ENCODE measurements at regions of chr12 and their contacts with region 1.

Region 1: DNA sequence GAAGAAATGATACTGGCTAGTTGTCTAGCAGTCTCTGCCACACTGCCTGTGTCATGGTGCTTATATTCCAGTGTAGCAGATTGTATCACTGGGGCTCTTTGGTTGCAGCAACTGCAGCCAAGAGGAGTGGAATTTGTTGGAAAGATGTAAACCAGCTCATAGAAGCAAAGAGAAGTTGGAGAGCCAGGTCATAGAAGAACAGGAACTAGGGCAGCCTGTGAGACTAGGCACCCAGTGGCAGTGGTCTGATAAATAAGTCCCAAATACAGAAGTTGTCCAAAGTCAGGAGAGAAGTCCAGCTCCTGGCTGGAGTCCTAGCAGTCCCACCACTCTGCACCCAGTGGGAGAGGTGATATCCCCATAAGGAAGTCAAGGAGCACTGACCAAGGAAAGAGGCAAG is 172.5 kb upstream of the ARID2 start:
- DNase-seq: no peak
- H3K4me3 ChIP-seq: no peak overlapping the region
- H3K27ac ChIP-seq: no peak overlapping the region
- H3K4me1 ChIP-seq: no peaks in the 10 kb centered on the region
- H3K27me3 ChIP-seq: no peaks in the 10 kb centered on the region
- CTCF ChIP-seq: no peak
- POLR2A ChIP-seq: no peak

Region 2: GRCh38 chr12:44917141-44917540 is 639.9 kb before region 1 on chr12:
- intact Hi-C with region 1: no loop called
- DNase-seq: no peak
- H3K4me3 ChIP-seq: no peak overlapping the region
- H3K27ac ChIP-seq: no peak overlapping the region
- H3K4me1 ChIP-seq: no peaks in the 10 kb centered on the region
- H3K27me3 ChIP-seq: no peaks in the 10 kb centered on the region
- CTCF ChIP-seq: no peak
- POLR2A ChIP-seq: no peak

Region 3: GRCh38 chr12:45518291-45519235 is 38.5 kb before region 1 on chr12:
- intact Hi-C with region 1: no loop called
- DNase-seq: no peak
- H3K4me3 ChIP-seq: no peak overlapping the region
- H3K27ac ChIP-seq: no peak overlapping the region
- H3K4me1 ChIP-seq: no peaks in the 10 kb centered on the region
- H3K27me3 ChIP-seq: no peaks in the 10 kb centered on the region
- CTCF ChIP-seq: no peak
- POLR2A ChIP-seq: no peak

Region 4: GRCh38 chr12:45543906-45544315 is 13.1 kb before region 1 on chr12:
- intact Hi-C with region 1: no loop called
- DNase-seq: no peak
- H3K4me3 ChIP-seq: no peak overlapping the region
- H3K27ac ChIP-seq: no peak overlapping the region
- H3K4me1 ChIP-seq: no peaks in the 10 kb centered on the region
- H3K27me3 ChIP-seq: no peaks in the 10 kb centered on the region
- CTCF ChIP-seq: peak; percentile 48 to 64 (median 50)
- POLR2A ChIP-seq: no peak

Region 5: GRCh38 chr12:45601888-45602287 is 44.9 kb after region 1 on chr12:
- intact Hi-C with region 1: loop called (anchors 2 kb)
- DNase-seq: no peak
- H3K4me3 ChIP-seq: no peak overlapping the region
- H3K27ac ChIP-seq: no peak overlapping the region
- H3K4me1 ChIP-seq: no peaks in the 10 kb centered on the region
- H3K27me3 ChIP-seq: no peaks in the 10 kb centered on the region
- CTCF ChIP-seq: no peak
- POLR2A ChIP-seq: no peak

Region 6: DNA sequence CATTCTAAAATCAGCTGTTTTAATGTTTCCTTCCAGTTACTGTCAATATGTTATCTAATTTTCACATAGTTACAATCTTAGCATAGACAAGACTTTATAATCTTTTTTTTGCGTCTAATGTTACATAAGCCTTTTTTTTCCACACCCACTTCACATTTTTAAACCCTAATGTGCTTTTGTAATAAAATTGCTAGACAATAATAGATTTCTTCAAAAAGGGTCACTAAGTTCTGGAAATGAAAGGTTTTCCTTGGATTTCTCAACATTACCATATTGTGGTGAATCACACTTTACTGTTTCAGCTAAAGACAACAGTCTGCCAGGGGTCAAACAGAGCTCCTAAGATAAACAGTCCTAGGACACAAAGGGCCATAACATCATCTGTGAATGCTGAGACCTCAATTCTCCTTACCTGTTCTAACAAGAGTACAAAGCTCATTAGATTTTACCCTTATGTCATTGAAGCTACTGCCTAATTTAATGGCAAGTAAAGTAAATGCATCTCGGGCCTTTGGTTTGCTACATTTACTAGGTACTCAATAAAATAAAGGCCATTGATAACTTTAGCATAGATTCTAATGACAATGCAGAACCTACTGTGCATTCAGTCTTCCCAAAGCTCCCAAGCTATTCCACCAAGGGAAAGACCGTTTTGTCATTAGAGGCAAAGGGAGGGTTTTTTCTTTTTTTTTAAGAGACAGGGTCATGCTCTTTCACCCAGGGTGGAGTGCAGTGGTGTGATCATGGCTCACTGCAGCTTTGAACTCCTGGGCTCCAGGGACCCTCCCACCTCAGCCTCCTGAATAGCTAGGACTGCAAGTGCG is 926.8 kb after region 1 on chr12:
- intact Hi-C with region 1: no loop called
- DNase-seq: no peak
- H3K4me3 ChIP-seq: no peak overlapping the region
- H3K27ac ChIP-seq: peak overlapping the region in 1 of 2 donors; percentile 27
- H3K4me1 ChIP-seq: no peaks in the 10 kb centered on the region
- H3K27me3 ChIP-seq: no peaks in the 10 kb centered on the region
- CTCF ChIP-seq: no peak
- POLR2A ChIP-seq: no peak

Measured in breast epithelium (tissue), 4 donors.